ENCODE measurements at regions of chr10 and their contacts with region 1.

Region 1: DNA sequence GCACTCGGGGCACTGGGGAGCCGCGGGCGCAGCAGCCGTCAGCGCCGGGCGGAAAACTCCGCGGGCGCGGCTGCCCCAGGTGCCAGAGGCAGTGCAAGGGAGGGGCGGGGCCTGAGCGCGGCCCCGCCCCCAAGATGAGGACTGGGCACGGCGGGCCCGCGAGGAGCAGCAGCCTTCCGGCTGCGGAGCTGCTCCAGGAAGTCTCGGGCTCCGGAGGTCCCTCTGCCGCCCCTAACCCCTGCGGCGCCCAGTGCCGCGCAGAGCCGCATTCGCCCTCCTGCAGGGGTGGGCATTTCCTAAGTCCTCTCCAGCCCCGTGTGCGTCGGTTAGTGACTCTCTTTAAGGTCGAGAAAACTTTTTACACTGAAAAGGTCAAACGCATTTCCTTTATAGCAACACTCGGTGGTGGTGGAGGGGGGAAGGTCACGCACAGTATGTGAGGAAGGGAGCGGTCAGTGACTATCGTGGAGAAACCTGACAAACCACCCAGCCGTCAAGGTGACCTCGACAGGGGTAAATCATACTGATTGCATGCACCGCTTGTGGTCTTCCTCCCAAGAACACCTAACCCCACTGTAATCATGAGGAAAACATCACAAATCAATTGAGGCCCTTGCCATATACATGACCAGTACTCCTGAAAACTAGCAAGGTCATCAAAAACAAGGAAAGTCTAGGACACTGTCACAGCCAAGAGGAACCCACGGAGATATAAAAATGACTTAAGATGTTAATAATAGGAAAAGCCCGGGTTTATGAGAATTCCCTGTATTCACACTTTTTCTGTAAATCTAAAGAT is at the start of gene ANXA11:
- DNase-seq: peak; percentile 70 to 93 (median 87)
- ATAC-seq: peak; percentile 82
- H3K4me3 ChIP-seq: peak within 1 kb of the TSS; percentile 67 to 70
- H3K4me3 Mint-ChIP-seq: peak within 1 kb of the TSS; percentile 96
- H3K27ac ChIP-seq: peak within 1 kb of the TSS; percentile 72 to 82
- H3K27ac Mint-ChIP-seq: peak within 1 kb of the TSS; percentile 94
- H3K4me1 ChIP-seq: peaks cover 49% of the 10 kb centered on the region
- H3K4me1 Mint-ChIP-seq: peaks cover 54% of the 10 kb centered on the region
- H3K27me3 ChIP-seq: no peaks in the 10 kb centered on the region
- H3K27me3 Mint-ChIP-seq: no peaks in the 10 kb centered on the region
- CTCF ChIP-seq: no peak
- total RNA-seq, gene ANXA11: 136 to 141 TPM

Region 2: DNA sequence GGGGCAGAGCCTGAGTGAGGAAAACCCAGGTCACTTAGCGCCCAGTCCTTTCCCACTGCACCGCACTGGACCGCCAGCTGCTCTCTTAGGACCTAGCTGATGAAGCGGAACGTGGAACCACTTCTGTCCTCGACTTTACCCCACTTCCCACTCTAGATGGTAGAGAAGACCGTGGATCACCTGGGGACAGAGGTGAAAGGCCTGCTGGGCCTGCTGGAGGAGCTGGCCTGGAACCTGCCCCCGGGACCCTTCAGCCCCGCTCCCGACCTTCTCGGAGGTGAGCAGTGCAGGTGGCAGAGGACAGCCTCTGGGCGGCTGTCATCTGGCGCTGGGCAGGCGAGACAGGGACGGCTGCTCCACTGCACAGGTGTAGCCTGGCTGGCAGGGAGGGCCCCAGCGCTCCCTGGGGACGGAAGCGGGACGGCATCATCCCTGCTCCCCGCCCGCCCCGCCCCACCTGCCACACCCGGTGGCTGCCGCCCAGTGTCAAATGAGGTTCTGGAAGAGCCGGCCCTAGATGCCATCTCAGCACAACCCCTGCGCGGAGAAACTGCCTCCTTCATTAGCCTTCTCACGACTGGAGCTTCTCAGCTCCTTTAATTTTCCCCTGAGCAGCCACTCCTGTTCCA is 61.5 kb before region 1 on chr10:
- CTCF ChIA-PET with region 1: interaction called, 13 read pairs
- POLR2A ChIA-PET with region 1: interaction called, 13 read pairs
- intact Hi-C with region 1: loop called (anchors 1 to 5 kb)
- DNase-seq: peak in 7 of 9 experiments; percentile 16 to 64 (median 29)
- ATAC-seq: peak; percentile 45
- H3K4me3 ChIP-seq: peak overlapping the region; percentile 48 to 51
- H3K4me3 Mint-ChIP-seq: peak overlapping the region; percentile 83
- H3K27ac ChIP-seq: no peak overlapping the region
- H3K27ac Mint-ChIP-seq: peak overlapping the region; percentile 75
- H3K4me1 ChIP-seq: peaks cover 17% of the 10 kb centered on the region
- H3K4me1 Mint-ChIP-seq: peaks cover 17% of the 10 kb centered on the region
- H3K27me3 ChIP-seq: no peaks in the 10 kb centered on the region
- H3K27me3 Mint-ChIP-seq: peaks cover 7% of the 10 kb centered on the region
- CTCF ChIP-seq: peak; percentile 9

Region 3: DNA sequence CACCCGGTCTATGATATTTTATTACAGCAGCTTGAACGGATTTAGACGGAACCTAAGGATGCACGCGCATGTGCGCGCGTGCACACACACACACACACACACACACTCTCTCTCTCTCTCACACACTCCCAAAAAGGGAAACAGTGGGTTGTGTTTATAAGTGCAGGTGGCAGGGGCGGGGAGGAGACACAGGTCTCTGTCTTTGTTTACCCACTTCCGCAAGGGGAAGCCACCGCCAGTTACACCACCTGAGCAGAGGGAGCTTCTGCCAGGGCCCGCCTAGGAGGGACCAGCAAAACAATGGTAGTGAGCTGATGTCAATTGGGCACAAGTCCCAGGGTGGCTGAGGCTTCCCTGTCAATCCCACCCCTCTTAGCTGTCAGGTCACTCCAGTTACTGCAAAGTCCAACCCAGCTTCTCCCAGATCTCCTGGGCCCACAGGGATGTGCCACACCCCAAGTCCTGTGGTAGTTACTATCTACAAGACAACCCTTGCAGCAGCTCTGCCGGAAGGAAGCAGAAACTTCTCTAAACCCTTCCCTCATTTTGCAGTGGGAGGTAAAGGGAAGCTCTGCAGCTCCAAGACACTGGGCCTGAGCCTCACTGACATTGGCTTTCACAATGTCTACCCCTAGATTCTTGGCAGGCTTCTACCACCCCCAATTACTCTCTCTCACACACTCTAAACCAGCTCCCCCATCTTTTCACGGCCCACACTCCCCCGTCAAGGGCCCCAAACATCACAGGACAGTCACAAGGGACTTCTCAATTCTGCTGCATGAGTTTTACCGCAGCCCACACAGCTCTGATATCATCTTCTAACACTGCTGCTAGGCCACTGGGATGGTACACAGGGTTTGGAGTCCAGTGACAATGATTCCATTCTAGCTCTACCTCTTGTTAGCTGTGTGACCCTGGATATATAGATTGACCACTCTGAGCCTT is 17.9 kb before region 1 on chr10:
- CTCF ChIA-PET with region 1: interaction called, 53 read pairs
- POLR2A ChIA-PET with region 1: interaction called, 71 read pairs
- intact Hi-C with region 1: loop called (anchors 1 kb)
- DNase-seq: peak; percentile 65 to 94 (median 83)
- ATAC-seq: peak; percentile 90
- H3K4me3 ChIP-seq: peak overlapping the region; percentile 34 to 42
- H3K4me3 Mint-ChIP-seq: peak overlapping the region; percentile 70
- H3K27ac ChIP-seq: peak overlapping the region; percentile 64 to 71
- H3K27ac Mint-ChIP-seq: peak overlapping the region; percentile 95
- H3K4me1 ChIP-seq: peaks cover 92% of the 10 kb centered on the region
- H3K4me1 Mint-ChIP-seq: peaks cover 86% of the 10 kb centered on the region
- H3K27me3 ChIP-seq: no peaks in the 10 kb centered on the region
- H3K27me3 Mint-ChIP-seq: no peaks in the 10 kb centered on the region
- CTCF ChIP-seq: no peak

Region 4: GRCh38 chr10:80260295-80261243 is 54.9 kb after region 1 on chr10:
- CTCF ChIA-PET with region 1: no interaction called
- POLR2A ChIA-PET with region 1: no interaction called
- intact Hi-C with region 1: no loop called
- DNase-seq: peak in 6 of 9 experiments; percentile 9 to 56 (median 38)
- ATAC-seq: peak; percentile 44
- H3K4me3 ChIP-seq: no peak overlapping the region
- H3K4me3 Mint-ChIP-seq: no peak overlapping the region
- H3K27ac ChIP-seq: no peak overlapping the region
- H3K27ac Mint-ChIP-seq: no peak overlapping the region
- H3K4me1 ChIP-seq: no peaks in the 10 kb centered on the region
- H3K4me1 Mint-ChIP-seq: no peaks in the 10 kb centered on the region
- H3K27me3 ChIP-seq: no peaks in the 10 kb centered on the region
- H3K27me3 Mint-ChIP-seq: peaks cover 2% of the 10 kb centered on the region
- CTCF ChIP-seq: peak; percentile 64

Region 5: DNA sequence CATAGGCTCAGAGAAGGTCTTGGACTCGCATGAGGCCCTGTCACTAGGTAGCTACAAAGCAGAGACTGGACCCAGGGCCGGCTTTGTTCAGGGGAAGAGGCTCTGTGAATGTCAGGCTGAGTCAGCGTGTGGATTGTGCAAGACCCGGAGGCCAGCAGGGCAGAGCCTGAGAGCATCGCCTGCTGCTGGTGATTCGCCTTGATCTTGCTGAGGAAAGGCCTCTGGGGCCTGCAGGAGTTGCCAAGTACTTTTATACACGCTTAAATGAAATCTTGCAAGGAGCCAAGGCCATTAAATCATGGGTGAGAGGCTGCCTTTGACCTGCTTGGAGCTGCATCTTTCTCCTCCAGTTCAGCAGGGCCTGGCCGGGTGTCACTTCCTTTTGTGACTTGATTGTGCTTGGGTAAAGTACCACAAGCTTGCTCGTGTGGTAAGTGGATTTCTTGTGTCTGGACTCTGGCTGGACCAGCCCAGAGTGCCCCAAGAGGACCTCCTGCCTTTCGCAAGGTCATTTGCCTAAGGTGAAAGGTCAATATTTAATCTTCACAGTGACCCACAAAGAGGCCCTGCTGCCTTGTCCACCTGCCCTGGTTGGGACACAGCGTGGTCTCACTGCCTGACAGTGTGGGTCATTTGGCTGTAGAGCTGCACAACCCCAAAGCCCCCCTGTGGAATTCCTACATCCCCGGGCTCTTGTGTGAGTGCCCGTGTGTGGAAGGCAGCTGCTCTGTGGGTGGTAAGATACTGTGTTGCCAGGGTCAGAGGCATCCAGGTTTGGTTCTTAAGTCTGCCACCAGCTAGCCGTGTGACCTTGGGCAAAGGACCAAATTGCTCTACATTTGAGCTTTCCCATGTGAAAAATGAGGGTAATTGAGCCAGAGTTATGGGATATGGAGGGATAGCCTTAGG is 293.4 kb after region 1 on chr10:
- CTCF ChIA-PET with region 1: no interaction called
- POLR2A ChIA-PET with region 1: no interaction called
- intact Hi-C with region 1: loop called in 1 of 2 experiments (anchors 10 kb)
- DNase-seq: peak in 7 of 9 experiments; percentile 27 to 66 (median 55)
- ATAC-seq: peak; percentile 39
- H3K4me3 ChIP-seq: peak overlapping the region; percentile 12 to 29
- H3K4me3 Mint-ChIP-seq: peak overlapping the region; percentile 74
- H3K27ac ChIP-seq: peak overlapping the region; percentile 11 to 84
- H3K27ac Mint-ChIP-seq: peak overlapping the region; percentile 96
- H3K4me1 ChIP-seq: peaks cover 98% of the 10 kb centered on the region
- H3K4me1 Mint-ChIP-seq: peaks cover 97% of the 10 kb centered on the region
- H3K27me3 ChIP-seq: no peaks in the 10 kb centered on the region
- H3K27me3 Mint-ChIP-seq: no peaks in the 10 kb centered on the region
- CTCF ChIP-seq: no peak

Measured in CD8-positive, alpha-beta T cell (primary cell).